GM10248 (cell line): ENCODE measurements at regions of chr7 and their contacts with region 1.

Region 1: DNA sequence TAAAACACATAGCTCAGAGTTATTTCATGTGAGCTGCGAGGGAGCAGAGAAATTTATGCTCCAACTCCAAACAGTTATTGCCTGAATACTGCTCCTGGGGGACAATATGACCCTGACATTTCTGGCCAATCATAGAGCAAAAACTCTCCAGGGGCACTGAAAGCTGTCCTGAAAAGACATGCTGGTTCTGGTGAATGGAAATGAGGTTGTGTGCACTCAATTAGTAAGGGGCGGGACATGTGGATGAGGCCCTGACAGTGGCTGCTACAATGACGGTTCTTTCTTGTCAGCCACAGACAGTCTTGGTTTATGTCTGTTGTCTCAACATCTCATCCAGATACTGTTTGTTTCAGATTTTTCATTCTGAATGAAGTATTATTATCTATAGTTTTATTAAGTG is 151.8 kb downstream of the TWIST1 start:
- DNase-seq: no peak
- CTCF ChIP-seq: no peak

Region 2: DNA sequence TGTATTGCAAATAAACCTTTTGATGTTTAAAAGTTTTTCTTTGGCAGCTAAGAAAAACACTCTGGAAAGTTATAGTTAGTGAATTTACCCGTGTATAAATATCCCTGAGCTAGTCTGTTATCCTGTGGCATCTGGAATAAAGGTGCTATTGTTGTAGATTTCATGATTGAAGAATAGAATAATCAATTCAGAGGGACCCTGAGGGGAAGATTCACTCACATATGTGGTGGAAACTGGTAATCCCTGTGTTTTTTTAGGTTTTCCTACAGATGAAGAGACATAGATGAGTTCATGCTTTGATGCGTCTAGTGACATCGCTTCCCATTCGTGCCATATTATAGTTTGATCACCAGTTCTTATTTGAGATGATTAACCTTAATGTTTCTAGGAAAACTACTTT is 12.8 kb before region 1 on chr7:
- CTCF ChIA-PET with region 1: interaction called, 10 read pairs
- POLR2A ChIA-PET with region 1: no interaction called
- DNase-seq: no peak
- CTCF ChIP-seq: no peak